PC-9 (cell line): ENCODE measurements at regions of chr11 and their contacts with region 1.

Region 1: DNA sequence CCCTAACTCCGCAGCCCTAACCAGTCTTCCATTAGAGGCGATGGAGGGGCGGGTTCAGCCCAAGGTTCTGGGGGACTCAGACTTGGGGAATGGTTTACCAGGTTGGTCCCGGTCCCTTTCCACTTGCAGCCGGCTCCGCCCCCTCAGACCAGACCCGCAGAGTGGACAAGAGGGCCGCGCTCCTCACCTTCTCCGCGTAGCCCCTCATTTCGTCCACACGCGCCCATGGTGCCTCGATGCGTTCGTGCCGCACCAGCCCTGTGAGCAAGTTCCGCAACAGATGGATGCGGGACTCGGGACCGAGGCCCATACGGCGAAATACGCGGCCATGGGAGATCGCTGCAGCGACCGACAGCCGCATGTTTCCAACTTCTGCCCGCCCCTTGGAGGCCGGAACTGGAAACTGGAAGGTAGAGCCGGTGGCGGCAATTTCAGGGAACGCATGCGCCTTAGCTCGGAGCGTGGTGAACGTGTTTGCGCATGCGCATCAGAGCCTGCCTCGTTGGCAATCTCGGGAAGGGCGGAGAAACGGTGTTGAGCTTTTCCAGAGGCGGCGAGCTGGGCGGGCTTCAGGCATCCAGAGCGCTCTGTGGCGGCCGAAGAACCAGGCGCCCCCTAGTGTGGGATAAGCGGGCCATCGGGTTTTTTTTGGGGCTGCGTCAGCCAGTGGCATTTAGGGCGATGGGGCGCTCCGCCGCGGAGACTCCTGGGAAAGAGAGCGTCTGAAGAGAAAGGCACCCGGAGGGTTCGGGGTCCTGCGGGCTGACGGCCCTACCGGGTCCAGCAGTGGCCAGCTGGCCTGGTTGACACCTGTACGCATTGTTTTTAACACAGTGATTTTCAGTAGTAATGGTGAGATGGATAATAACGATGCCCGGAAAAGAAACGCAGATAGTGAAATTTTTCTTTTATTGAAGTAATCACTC is at the start of gene MRPL17:
- DNase-seq: peak; percentile 89 to 95
- H3K4me3 ChIP-seq: peak within 1 kb of the TSS; percentile 88
- H3K27ac ChIP-seq: peak within 1 kb of the TSS; percentile 43
- H3K4me1 ChIP-seq: peaks cover 10% of the 10 kb centered on the region
- H3K27me3 ChIP-seq: no peaks in the 10 kb centered on the region
- CTCF ChIP-seq: peak; percentile 76
- total RNA-seq, gene MRPL17: 35.5 and 42.4 TPM in 2 replicates

Region 2: GRCh38 chr11:6603287-6604080 is 79.7 kb before region 1 on chr11 and contains the starts of genes ILK and RRP8:
- CTCF ChIA-PET with region 1: interaction called, 4 read pairs
- POLR2A ChIA-PET with region 1: interaction called, 8 read pairs
- intact Hi-C with region 1: loop called (anchors 2 kb)
- DNase-seq: peak; percentile 61 to 77
- H3K4me3 ChIP-seq: peak within 1 kb of the TSS; percentile 98
- H3K27ac ChIP-seq: peak within 1 kb of the TSS; percentile 51
- H3K4me1 ChIP-seq: peaks cover 28% of the 10 kb centered on the region
- H3K27me3 ChIP-seq: no peaks in the 10 kb centered on the region
- CTCF ChIP-seq: no peak
- total RNA-seq, gene ILK: 65.3 and 69.7 TPM in 2 replicates
- total RNA-seq, gene RRP8: 10.0 and 10.1 TPM in 2 replicates

Region 3: GRCh38 chr11:6612213-6613041 is 70.8 kb before region 1 on chr11 and contains the start of gene TAF10:
- CTCF ChIA-PET with region 1: no interaction called
- POLR2A ChIA-PET with region 1: interaction called, 8 read pairs
- intact Hi-C with region 1: loop called (anchors 1 kb)
- DNase-seq: peak; percentile 78 to 86
- H3K4me3 ChIP-seq: peak within 1 kb of the TSS; percentile 98
- H3K27ac ChIP-seq: peak within 1 kb of the TSS; percentile 87
- H3K4me1 ChIP-seq: peaks cover 10% of the 10 kb centered on the region
- H3K27me3 ChIP-seq: no peaks in the 10 kb centered on the region
- CTCF ChIP-seq: peak; percentile 56; the same call in 1 of the 2 replicates
- total RNA-seq, gene TAF10: 51.5 and 61.2 TPM in 2 replicates

Region 4: GRCh38 chr11:6620636-6621035 is 62.6 kb before region 1 on chr11:
- CTCF ChIA-PET with region 1: interaction called, 3 read pairs
- POLR2A ChIA-PET with region 1: interaction called, 12 read pairs
- intact Hi-C with region 1: no loop called
- DNase-seq: no peak
- H3K4me3 ChIP-seq: no peak overlapping the region
- H3K27ac ChIP-seq: no peak overlapping the region
- H3K4me1 ChIP-seq: peaks cover 4% of the 10 kb centered on the region; the same call in 1 of the 2 replicates
- H3K27me3 ChIP-seq: no peaks in the 10 kb centered on the region
- CTCF ChIP-seq: no peak